CD4-positive, alpha-beta memory T cell (primary cell): ENCODE measurements at regions of chr11 and their contacts with region 1.

Region 1: DNA sequence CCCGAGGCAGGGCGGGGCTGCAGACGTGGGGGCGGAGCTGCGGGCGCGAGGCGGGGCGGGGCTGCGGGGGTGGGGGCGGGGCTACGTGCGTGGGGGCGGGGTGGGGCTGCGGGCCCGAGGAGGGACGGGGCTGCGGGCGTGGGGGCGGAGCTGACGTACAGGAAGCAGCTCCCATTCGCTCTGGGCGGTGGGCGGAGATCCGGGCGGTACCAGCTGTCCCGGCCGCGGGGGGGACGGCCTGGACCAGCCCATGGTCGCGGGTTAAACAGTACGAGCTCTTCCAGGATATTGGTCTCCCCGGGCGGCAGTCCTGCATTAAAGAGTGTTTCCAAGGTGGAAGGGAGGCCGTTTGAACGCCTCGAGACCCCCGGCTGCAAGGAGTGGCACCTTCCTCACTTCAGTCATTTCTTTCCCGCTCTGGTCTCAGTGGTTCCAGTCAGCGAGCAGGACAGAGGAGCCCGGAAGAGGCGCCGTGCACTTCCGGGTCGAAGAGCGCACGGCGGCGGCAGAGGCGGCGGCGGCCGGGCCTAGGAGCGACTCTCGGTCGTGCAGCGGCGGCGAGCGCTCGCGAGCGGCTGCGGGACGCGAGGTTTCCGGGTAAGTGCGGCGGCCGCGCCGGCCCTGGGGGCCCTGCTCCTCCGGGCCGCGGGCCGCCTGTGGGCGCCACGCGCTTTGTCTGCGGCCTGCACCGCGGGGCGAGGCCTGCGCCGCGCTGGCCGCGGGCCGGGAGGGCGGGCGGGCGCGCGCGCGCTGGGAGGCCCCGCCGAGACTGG is at the start of gene PHRF1:
- DNase-seq: peak; percentile 95 to 98 (median 97)
- H3K4me3 ChIP-seq: peak within 1 kb of the TSS; percentile 85 to 93
- H3K4me3 Mint-ChIP-seq: peak within 1 kb of the TSS; percentile 94 to 98 (median 98)
- H3K27ac ChIP-seq: peak within 1 kb of the TSS; percentile 77
- H3K27ac Mint-ChIP-seq: peak within 1 kb of the TSS; percentile 93 to 99 (median 99)
- H3K4me1 ChIP-seq: peaks cover 58% of the 10 kb centered on the region
- H3K4me1 Mint-ChIP-seq: peaks cover 31 to 56% (median 45%) of the 10 kb centered on the region in 4 donors
- H3K27me3 ChIP-seq: no peaks in the 10 kb centered on the region
- H3K27me3 Mint-ChIP-seq: peaks cover 0 to 11% of the 10 kb centered on the region in 2 donors
- total RNA-seq, gene PHRF1: 49.2 to 54.5 TPM

Region 2: DNA sequence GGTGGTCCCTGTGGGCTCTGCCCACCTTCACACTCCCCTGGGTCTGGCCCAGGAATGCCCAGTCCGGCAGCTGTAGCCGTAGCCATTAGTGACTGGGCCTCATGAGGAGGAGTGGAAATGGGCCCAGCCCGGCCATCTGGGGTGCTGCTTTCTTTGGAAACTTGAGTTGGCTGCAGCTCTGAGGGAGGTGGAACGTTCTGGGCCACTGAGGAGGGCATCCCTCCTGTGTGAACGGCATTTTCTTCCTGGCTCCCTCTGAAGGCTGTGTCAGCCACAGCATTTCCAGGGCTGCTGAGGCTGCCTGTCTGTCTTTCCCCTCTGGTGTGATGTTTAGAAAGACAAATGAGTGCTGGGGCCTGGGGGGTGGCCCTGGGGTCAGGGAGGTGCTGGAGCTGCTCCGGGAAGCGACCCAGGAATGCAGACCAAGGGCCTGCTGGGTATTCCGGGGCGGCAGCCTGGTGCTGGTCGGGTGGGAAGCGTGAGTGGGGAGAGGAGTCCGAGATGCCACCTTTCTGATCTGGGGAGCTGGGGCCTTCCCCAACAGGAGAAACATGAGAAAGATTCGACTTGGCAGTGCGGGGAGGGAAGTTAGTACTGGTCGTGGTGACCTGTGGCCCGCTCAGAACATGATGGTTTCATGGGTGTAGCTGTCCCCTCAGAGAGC is 99.0 kb before region 1 on chr11:
- CTCF ChIA-PET with region 1: no interaction called
- POLR2A ChIA-PET with region 1: no interaction called
- intact Hi-C with region 1: no loop called
- DNase-seq: no peak
- H3K4me3 ChIP-seq: no peak overlapping the region
- H3K4me3 Mint-ChIP-seq: no peak overlapping the region
- H3K27ac ChIP-seq: no peak overlapping the region
- H3K27ac Mint-ChIP-seq: no peak overlapping the region
- H3K4me1 ChIP-seq: no peaks in the 10 kb centered on the region
- H3K4me1 Mint-ChIP-seq: no peaks in the 10 kb centered on the region
- H3K27me3 ChIP-seq: no peaks in the 10 kb centered on the region
- H3K27me3 Mint-ChIP-seq: no peaks in the 10 kb centered on the region

Region 3: DNA sequence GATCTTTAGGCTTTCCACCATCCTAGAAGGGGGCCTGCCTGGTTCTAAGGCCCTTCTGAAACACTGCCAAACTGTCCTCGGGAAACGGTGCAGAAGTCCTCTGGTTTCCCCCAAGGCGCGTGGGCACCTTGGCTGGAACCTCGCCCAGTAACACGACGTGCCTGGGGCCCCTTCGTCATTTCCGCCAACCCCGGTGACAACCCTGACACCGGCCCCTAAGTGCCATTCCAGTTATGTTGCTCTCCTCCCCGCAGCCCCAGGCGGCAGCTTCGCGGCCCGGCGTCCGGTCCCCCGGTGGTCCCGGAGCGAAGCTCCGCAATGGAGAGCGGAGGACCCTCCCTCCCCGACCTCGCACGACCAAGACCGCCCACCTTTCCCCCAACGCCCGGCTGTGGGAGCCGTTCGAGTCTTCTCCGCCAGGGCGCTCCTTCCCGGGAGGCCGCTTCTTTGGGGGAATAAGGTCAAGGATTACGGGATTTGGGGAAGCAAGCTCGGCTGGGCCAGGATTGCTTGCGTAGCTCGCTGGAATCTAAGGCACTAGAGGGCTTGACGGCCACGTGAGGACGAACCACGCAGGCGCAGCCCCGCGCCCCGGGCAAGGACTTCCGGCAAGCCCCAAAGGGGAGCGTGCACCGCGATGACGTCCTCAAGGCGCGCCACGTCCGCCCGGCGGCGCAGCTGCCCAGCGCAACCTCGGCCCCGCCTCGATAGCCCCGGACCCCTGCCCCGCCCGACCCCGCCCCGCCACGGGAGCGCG is 69.8 kb before region 1 on chr11:
- CTCF ChIA-PET with region 1: no interaction called
- POLR2A ChIA-PET with region 1: interaction called, 9 read pairs
- intact Hi-C with region 1: loop called (anchors 1 kb)
- DNase-seq: peak; percentile 94 to 98 (median 97)
- H3K4me3 ChIP-seq: peak overlapping the region; percentile 91 to 99
- H3K4me3 Mint-ChIP-seq: peak overlapping the region; percentile 95 to 100 (median 98)
- H3K27ac ChIP-seq: peak overlapping the region; percentile 100
- H3K27ac Mint-ChIP-seq: peak overlapping the region; percentile 100
- H3K4me1 ChIP-seq: peaks cover 35% of the 10 kb centered on the region
- H3K4me1 Mint-ChIP-seq: peaks cover 6 to 42% (median 25%) of the 10 kb centered on the region in 4 donors
- H3K27me3 ChIP-seq: no peaks in the 10 kb centered on the region
- H3K27me3 Mint-ChIP-seq: no peaks in the 10 kb centered on the region

Region 4: DNA sequence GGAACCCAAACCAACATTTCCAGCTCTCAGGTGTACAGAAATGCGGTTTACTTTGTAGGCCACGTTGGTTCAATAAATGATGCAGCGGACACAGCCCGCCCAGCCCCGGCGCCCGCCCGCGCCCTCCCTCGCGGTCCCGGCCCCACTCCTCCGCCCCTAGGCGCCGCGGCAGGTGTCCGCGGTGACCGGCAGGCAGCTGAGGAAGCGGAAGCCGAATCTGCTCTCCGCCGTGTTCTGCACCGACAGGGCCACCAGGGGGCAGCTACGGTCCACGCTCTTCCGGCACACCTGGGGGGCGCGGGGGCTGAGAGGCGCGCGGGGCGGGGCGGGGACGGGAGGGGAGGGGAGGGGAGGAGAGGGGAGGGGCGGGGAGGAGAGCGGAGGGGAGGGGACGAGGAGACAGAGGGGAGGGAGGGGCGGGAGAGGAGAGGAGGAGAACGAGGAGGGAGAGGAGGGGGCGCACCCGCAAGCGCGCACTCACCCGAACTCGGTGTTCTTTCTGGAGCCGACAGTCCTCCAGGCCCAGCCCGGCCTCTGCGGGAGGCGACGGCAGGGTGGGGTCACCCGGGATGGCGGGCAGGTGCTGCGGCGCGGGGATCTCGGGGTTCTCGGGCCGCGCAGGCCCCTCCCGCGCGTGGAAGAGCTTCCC is 21.2 kb before region 1 on chr11:
- CTCF ChIA-PET with region 1: interaction called, 7 read pairs
- POLR2A ChIA-PET with region 1: interaction called, 29 read pairs
- intact Hi-C with region 1: loop called (anchors 1 kb)
- DNase-seq: peak; percentile 72 to 77 (median 74)
- H3K4me3 ChIP-seq: peak overlapping the region in 1 of 2 donors; percentile 43
- H3K4me3 Mint-ChIP-seq: peak overlapping the region in 6 of 8 donors; percentile 13 to 68 (median 58)
- H3K27ac ChIP-seq: peak overlapping the region; percentile 21
- H3K27ac Mint-ChIP-seq: peak overlapping the region in 1 of 7 donors; percentile 46
- H3K4me1 ChIP-seq: peaks cover 16% of the 10 kb centered on the region
- H3K4me1 Mint-ChIP-seq: peaks cover 3 to 12% (median 4%) of the 10 kb centered on the region in 4 donors
- H3K27me3 ChIP-seq: no peaks in the 10 kb centered on the region
- H3K27me3 Mint-ChIP-seq: no peaks in the 10 kb centered on the region

Region 5: DNA sequence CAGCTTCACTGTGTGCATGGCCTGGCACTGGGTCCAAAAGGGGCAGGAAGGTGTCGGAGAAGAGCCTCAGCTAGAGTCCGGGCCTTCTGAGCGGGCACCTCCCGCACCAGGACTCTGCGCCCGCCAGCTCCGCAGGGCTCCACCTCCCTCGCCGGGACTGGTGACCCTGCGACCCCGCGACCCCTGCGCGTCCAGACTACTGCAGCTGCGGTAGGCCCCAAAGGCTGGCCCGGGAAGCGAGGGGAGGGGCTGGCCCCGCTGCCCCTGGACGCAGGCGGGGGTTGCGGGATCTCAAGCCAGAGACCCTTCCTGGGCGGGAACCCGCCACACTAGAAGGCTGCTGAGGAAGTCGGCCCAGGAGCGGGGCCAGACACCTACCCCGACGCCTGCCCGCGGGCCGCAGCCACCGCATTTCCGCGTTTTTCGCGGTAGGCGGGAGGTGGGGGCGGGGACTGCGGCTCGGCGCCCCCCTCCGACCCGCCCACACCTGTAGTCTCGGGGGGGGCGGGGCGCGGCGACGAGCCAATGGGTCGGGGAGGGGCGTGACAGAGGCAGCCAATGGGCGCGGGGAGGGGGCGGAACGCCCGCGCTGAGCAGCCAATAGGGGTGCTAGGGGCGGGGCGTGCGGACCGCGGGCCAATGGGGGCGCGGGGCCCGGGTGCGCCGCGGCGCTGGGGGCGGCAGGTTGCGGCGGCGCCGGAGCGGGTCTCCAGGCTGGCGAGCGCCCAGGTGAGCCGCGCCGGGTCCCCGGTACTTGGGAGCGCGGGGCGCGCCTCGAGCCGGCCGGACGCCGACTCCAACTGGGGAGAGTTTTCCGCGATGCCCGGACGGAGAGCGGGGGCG is 15.7 kb before region 1 on chr11 and contains the starts of genes LMNTD2 and RASSF7:
- CTCF ChIA-PET with region 1: interaction called, 7 read pairs
- POLR2A ChIA-PET with region 1: interaction called, 56 read pairs
- intact Hi-C with region 1: loop called (anchors 1 kb)
- DNase-seq: peak; percentile 92 to 95 (median 92)
- H3K4me3 ChIP-seq: peak within 1 kb of the TSS; percentile 69 to 75
- H3K4me3 Mint-ChIP-seq: peak within 1 kb of the TSS; percentile 84 to 94 (median 89)
- H3K27ac ChIP-seq: peak within 1 kb of the TSS; percentile 62
- H3K27ac Mint-ChIP-seq: peak within 1 kb of the TSS; percentile 80 to 93 (median 89)
- H3K4me1 ChIP-seq: peaks cover 22% of the 10 kb centered on the region
- H3K4me1 Mint-ChIP-seq: peaks cover 8 to 17% (median 13%) of the 10 kb centered on the region in 4 donors
- H3K27me3 ChIP-seq: no peaks in the 10 kb centered on the region
- H3K27me3 Mint-ChIP-seq: no peaks in the 10 kb centered on the region
- total RNA-seq, gene LMNTD2: 7.0 to 8.1 TPM
- total RNA-seq, gene RASSF7: 52.7 to 55.2 TPM

Region 6: DNA sequence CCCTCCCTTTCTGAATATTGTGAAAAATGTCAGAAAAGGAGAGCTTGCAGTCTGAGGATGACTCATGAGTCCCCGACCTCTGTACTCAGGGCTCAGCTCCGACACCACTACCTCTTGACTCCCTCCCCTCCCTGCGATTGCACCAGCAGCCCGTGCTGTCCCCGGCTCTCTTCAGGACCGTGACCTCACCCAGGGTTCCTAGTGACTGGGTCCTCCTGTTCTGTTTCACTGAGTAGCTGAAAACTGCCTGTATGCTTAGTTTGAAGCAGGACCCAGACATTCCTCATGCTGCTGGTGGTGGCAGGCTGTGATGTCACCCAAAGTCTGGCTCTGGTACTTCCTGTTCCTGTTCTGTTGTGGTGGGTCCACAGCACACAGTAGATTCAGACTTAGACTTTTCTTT is 11.8 kb after region 1 on chr11:
- CTCF ChIA-PET with region 1: interaction called, 4 read pairs
- POLR2A ChIA-PET with region 1: interaction called, 18 read pairs
- intact Hi-C with region 1: loop called (anchors 1 kb)
- DNase-seq: peak; percentile 61 to 94 (median 71)
- H3K4me3 ChIP-seq: no peak overlapping the region
- H3K4me3 Mint-ChIP-seq: peak overlapping the region in 7 of 8 donors; percentile 59 to 77 (median 70)
- H3K27ac ChIP-seq: peak overlapping the region; percentile 41
- H3K27ac Mint-ChIP-seq: peak overlapping the region; percentile 91 to 99 (median 98)
- H3K4me1 ChIP-seq: peaks cover 21% of the 10 kb centered on the region
- H3K4me1 Mint-ChIP-seq: peaks cover 12 to 25% (median 16%) of the 10 kb centered on the region in 4 donors
- H3K27me3 ChIP-seq: no peaks in the 10 kb centered on the region
- H3K27me3 Mint-ChIP-seq: no peaks in the 10 kb centered on the region

Region 7: GRCh38 chr11:615504-616319 is 39.5 kb after region 1 on chr11 and contains the start of gene IRF7:
- CTCF ChIA-PET with region 1: no interaction called
- POLR2A ChIA-PET with region 1: interaction called, 27 read pairs
- intact Hi-C with region 1: loop called (anchors 1 kb)
- DNase-seq: peak; percentile 79 to 89 (median 83)
- H3K4me3 ChIP-seq: peak within 1 kb of the TSS; percentile 78 to 80
- H3K4me3 Mint-ChIP-seq: peak within 1 kb of the TSS; percentile 90 to 96 (median 93)
- H3K27ac ChIP-seq: peak within 1 kb of the TSS; percentile 96
- H3K27ac Mint-ChIP-seq: peak within 1 kb of the TSS; percentile 89 to 96 (median 93)
- H3K4me1 ChIP-seq: peaks cover 29% of the 10 kb centered on the region
- H3K4me1 Mint-ChIP-seq: peaks cover 6 to 35% (median 20%) of the 10 kb centered on the region in 4 donors
- H3K27me3 ChIP-seq: no peaks in the 10 kb centered on the region
- H3K27me3 Mint-ChIP-seq: no peaks in the 10 kb centered on the region
- total RNA-seq, gene IRF7: 67.6 to 76.6 TPM